Tibial artery (tissue), 4 donors: ENCODE measurements at regions of chr2 and their contacts with region 1.

Region 1: DNA sequence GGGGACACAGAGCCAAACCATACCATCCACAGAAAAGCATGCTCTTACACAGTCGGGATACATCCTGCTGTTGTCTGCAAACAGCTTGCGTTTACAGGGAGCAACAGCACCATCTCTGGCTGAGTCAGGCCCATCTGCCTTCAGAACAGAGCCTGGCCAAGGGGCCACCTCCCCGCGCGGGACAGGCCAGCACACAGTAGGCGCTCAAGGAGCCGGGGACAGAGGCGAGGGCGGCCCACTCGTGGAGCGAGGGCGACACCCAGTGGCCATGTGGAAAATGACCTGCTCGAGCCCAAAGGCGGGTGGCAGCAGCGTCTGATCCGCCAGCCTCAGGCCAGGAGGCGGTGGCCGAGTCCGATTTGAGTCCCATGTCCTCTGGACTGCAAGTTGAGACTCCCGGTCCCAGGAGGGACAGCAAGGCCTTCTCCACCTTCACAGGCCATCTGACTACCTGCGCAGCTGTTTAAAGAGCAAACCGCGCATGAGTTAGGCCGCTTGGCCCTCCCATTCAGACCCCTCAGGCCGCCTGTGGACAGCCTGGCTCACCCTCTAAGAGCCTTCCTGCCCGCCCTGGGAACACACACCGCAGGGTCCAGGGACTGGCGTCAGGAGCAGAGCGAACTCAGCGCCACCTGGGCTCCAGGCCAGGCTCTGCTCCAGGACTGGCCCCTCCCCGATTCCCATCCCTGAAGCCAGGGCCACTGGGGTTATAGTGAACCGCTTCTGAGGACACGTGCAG is 38.3 kb downstream of the TTC32 start:
- DNase-seq: peak; percentile 54 to 88
- H3K4me3 ChIP-seq: no peak overlapping the region
- H3K27ac ChIP-seq: peak overlapping the region; percentile 76 to 83
- H3K4me1 ChIP-seq: peaks cover 0 to 48% (median 36%) of the 10 kb centered on the region in 4 donors
- H3K27me3 ChIP-seq: no peaks in the 10 kb centered on the region
- CTCF ChIP-seq: peak; percentile 98 to 99

Region 2: DNA sequence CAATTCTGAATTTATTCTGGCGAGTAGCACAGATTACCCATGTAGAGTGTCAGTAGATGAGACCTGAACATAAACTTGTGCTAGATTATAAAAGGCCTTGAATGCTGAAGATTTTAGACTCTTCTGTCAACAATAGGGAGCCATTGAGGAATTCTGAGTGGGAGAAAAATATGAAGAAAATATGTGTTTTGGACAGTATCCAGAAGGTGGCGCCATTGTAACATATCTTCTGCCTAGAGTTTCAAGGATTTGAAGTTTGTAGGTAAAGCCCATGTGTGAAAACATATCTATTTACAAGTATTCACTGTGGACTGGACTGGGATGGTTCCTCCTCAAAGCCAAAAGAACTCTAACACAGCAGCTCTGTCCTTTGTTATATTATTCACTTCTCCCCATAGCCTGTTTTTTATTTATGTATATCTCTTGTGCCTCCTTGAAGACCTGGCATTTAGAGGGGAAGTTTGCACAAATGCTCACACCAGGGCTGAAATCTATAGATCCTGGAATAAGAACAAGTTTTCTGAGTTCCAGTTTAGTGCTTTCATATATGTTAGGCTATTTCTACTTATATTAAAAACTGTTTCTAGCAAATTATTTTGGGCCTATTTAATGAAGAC is 1427.9 kb before region 1 on chr2:
- intact Hi-C with region 1: loop called (anchors 10 kb)
- DNase-seq: no peak
- H3K4me3 ChIP-seq: no peak overlapping the region
- H3K27ac ChIP-seq: peak overlapping the region; percentile 16 to 63
- H3K4me1 ChIP-seq: peaks cover 0 to 30% (median 9%) of the 10 kb centered on the region in 4 donors
- H3K27me3 ChIP-seq: no peaks in the 10 kb centered on the region
- CTCF ChIP-seq: peak; percentile 65 to 71

Region 3: DNA sequence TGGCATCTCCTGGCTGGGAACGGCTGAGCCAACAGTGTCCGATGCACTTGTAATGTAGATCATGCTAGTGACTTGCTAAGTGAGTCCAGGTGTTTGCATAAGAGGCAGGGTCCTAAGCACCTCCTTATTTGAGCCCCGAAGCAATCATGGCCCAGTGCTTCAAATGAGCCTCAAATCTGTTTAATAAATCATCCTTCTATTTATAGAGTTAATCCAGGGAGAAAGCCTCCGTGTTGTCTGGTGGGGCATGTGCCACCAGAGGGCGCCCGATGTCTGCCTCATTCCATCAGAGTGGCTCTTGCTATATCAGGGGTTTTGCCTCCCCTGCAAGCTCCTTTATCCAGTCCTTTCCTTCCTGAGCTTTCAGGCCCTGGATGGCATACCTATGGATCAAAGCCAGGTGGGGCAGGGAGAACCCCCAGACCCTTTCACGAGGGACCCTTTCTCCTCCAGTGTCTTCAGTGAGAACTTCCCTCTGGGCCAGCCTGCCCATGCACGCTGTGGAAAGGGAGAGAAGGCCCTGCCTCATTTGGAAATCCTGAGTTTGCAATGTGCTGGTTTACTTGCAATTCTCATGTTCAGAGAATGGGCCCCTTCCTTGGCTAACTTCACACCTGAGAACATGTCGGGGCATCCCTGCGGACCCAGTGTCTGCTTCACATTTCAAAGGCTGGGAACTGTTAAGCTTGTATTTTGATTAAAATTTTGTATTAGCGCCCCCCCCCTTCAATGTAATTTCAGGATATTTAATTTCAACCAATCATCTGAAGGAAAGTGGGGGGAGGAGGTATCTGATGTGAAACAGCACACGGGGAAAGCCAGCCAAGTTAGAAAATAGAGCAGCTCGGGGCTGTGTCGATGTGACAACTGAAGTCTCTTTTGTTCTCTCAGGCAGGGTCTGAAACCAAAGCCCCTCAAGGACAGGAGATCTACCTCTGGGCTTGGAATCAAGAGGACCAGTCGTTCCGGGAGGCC is 1342.7 kb before region 1 on chr2:
- intact Hi-C with region 1: loop called (anchors 5 kb)
- DNase-seq: peak; percentile 88 to 93
- H3K4me3 ChIP-seq: no peak overlapping the region
- H3K27ac ChIP-seq: peak overlapping the region; percentile 70 to 76
- H3K4me1 ChIP-seq: peaks cover 0 to 39% (median 23%) of the 10 kb centered on the region in 4 donors
- H3K27me3 ChIP-seq: no peaks in the 10 kb centered on the region
- CTCF ChIP-seq: peak; percentile 92 to 93

Region 4: GRCh38 chr2:18903750-18904149 is 959.7 kb before region 1 on chr2:
- intact Hi-C with region 1: loop called (anchors 10 kb)
- DNase-seq: no peak
- H3K4me3 ChIP-seq: no peak overlapping the region
- H3K27ac ChIP-seq: no peak overlapping the region
- H3K4me1 ChIP-seq: peaks cover 0 to 37% (median 27%) of the 10 kb centered on the region in 4 donors
- H3K27me3 ChIP-seq: no peaks in the 10 kb centered on the region
- CTCF ChIP-seq: no peak

Region 5: GRCh38 chr2:19362755-19363473 is 500.6 kb before region 1 on chr2:
- intact Hi-C with region 1: loop called (anchors 2 kb)
- DNase-seq: peak; percentile 76 to 91
- H3K4me3 ChIP-seq: peak overlapping the region; percentile 57 to 60
- H3K27ac ChIP-seq: peak overlapping the region; percentile 55 to 93
- H3K4me1 ChIP-seq: peaks cover 0 to 30% (median 14%) of the 10 kb centered on the region in 4 donors
- H3K27me3 ChIP-seq: no peaks in the 10 kb centered on the region
- CTCF ChIP-seq: peak; percentile 79 to 80

Region 6: GRCh38 chr2:19682493-19682892 is 181.0 kb before region 1 on chr2:
- intact Hi-C with region 1: loop called (anchors 5 kb)
- DNase-seq: no peak
- H3K4me3 ChIP-seq: no peak overlapping the region
- H3K27ac ChIP-seq: no peak overlapping the region
- H3K4me1 ChIP-seq: peaks cover 0 to 12% (median 9%) of the 10 kb centered on the region in 4 donors
- H3K27me3 ChIP-seq: no peaks in the 10 kb centered on the region
- CTCF ChIP-seq: no peak

Region 7: DNA sequence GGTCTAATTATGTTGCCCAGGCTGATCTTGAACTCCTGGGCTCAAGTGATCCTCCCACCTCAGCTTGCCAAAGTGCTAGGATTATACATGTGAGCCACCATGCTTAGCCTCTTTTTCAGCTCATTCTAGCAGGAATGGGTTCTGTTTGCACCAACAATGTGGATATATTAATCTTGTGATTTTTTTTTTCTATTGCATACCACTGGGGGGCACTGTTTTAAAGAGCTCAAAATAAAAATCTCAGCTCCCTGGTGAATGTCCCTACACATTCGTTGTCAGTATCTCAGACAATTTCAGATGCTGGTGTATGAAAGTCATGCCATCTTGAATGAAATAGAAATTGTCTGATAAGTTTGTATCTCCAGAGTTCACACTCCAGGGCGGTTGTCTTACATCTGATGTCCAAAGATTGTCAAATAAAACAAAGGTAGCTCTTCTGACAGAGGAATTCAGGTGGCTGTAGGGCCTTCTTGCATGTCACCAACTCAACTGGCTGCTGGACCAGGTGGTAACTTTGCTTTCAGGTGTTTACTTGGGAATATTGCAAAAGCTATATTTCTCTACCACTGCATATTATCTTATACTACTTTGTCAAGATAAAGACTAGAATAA is 152.1 kb after region 1 on chr2:
- intact Hi-C with region 1: no loop called
- DNase-seq: no peak
- H3K4me3 ChIP-seq: no peak overlapping the region
- H3K27ac ChIP-seq: no peak overlapping the region
- H3K4me1 ChIP-seq: peaks cover 0 to 14% (median 12%) of the 10 kb centered on the region in 4 donors
- H3K27me3 ChIP-seq: no peaks in the 10 kb centered on the region
- CTCF ChIP-seq: peak; percentile 51 to 65

Region 8: GRCh38 chr2:21727101-21727500 is 1863.6 kb after region 1 on chr2:
- intact Hi-C with region 1: no loop called
- DNase-seq: no peak
- H3K4me3 ChIP-seq: no peak overlapping the region
- H3K27ac ChIP-seq: no peak overlapping the region
- H3K4me1 ChIP-seq: no peaks in the 10 kb centered on the region
- H3K27me3 ChIP-seq: no peaks in the 10 kb centered on the region
- CTCF ChIP-seq: no peak